ENCODE measurements at regions of chr1 and their contacts with region 1.

Region 1: GRCh38 chr1:22773981-22774832 is 63.6 kb downstream of the EPHB2 start:
- DNase-seq: peak; percentile 94

Region 2: DNA sequence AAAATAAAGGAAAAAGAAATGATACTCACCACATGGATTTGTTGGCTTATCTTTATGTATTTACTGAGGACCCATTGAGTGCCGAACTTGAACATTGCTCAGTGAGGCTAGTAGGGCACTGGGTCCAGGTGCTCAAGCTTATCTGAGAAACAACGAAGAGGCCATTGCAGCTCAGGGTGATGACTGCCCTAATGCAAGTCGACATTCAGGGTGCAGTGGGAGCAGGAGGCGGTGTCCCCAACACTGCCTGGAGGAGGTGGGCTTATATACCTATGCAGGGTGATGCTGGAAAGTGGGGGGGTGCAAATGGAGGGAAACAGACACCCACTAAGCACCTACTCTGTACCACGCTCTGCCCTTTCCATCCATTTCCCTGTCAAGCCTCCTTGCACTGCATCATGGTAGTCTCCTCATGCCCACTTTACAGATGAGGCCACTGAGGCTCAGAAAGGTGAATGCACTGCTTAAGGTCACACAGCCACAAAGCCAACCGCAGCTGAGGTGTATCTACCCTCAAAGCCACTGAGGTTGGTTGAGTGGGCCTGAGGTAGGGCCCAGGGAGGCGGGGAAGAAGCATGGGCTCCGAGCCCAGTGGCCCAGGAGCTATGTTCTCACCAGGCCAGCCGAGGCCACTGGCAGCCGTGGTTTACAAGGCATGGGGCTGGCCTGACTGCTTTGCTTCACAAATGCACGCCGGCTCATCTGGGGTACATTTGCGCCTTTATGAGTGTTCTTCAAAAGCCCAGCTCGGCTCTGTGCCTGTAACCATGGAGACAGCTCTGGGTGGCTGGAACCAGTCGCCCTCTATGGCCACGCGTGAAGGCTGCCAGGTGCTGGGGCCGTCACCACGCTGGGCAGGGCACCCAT is 40.2 kb after region 1 on chr1:
- intact Hi-C with region 1: loop called in 1 of 2 experiments (anchors 1 kb)
- DNase-seq: no peak